Stomach (tissue), 19 donors: ENCODE measurements at regions of chr14 and their contacts with region 1.

Region 1: GRCh38 chr14:37874429-37875191 is 279.2 kb downstream of the TTC6 start:
- DNase-seq: peak; percentile 89 to 92
- H3K4me3 ChIP-seq: no peak overlapping the region
- H3K27ac ChIP-seq: no peak overlapping the region
- H3K4me1 ChIP-seq: peaks cover 0 to 15% (median 6%) of the 10 kb centered on the region in 4 donors
- H3K27me3 ChIP-seq: no peaks in the 10 kb centered on the region
- CTCF ChIP-seq: peak in 5 of 7 experiments; percentile 77 to 84 (median 84)
- EP300 ChIP-seq: no peak
- POLR2A ChIP-seq: no peak

Region 2: DNA sequence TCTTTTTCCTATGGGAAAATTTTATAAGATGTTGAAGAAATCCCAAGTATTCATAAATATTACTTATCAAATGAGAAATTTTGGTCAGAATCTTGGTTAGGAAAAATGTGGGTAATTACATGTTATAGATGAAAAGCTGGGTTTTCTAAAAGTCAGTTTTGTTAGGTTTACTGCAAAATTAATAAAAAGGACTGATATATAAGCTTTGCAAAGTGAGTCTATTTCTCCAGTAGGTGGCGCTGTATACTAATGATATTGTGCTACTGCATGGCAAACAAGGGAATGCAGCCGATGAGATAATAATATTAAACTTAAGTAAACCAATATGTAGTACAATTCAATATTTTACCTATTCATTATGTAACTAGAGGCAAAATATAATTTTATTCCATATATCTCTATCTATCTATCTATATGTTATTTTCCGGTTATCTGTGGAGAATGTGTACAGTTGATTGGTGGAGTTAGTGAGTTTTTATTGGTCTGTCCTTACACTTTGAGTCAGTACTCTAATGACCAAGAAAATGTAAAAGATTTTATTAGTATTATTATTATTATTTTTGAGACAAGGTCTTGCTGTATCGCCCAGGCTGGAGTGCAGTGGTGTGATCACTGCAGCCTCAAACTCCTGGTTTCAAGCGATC is 643.9 kb before region 1 on chr14:
- intact Hi-C with region 1: loop called (anchors 10 kb)
- DNase-seq: peak in 1 of 2 donors; percentile 83
- H3K4me3 ChIP-seq: no peak overlapping the region
- H3K27ac ChIP-seq: no peak overlapping the region
- H3K4me1 ChIP-seq: peaks cover 0 to 7% (median 2%) of the 10 kb centered on the region in 4 donors
- H3K27me3 ChIP-seq: no peaks in the 10 kb centered on the region
- CTCF ChIP-seq: peak in 5 of 7 experiments; percentile 29 to 86 (median 69)
- EP300 ChIP-seq: no peak
- POLR2A ChIP-seq: no peak

Region 3: DNA sequence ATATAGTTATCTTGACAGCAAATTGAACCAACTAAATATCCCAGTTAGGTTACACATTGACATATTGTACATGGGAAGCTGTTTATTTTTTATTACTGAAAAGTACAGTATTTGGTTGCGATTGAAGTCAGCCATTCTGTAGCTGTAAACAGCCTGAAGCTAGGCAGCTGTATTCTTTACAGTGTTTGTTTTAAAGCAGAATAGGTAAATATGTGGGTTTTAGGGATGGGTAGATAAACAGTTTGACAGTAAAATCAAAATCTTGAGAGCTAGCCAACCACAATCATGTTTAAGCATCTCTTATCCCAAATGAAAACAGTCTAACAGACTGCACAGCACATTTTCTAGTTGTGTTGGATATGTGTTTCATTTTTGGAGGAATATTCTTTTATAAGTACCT is 233.5 kb before region 1 on chr14:
- intact Hi-C with region 1: no loop called
- DNase-seq: no peak
- H3K4me3 ChIP-seq: no peak overlapping the region
- H3K27ac ChIP-seq: no peak overlapping the region
- H3K4me1 ChIP-seq: no peaks in the 10 kb centered on the region
- H3K27me3 ChIP-seq: no peaks in the 10 kb centered on the region
- CTCF ChIP-seq: no peak
- EP300 ChIP-seq: no peak
- POLR2A ChIP-seq: no peak